Cardiac septum (tissue), 1 donor: ENCODE measurements at regions of chr1 and their contacts with region 1.

Region 1: DNA sequence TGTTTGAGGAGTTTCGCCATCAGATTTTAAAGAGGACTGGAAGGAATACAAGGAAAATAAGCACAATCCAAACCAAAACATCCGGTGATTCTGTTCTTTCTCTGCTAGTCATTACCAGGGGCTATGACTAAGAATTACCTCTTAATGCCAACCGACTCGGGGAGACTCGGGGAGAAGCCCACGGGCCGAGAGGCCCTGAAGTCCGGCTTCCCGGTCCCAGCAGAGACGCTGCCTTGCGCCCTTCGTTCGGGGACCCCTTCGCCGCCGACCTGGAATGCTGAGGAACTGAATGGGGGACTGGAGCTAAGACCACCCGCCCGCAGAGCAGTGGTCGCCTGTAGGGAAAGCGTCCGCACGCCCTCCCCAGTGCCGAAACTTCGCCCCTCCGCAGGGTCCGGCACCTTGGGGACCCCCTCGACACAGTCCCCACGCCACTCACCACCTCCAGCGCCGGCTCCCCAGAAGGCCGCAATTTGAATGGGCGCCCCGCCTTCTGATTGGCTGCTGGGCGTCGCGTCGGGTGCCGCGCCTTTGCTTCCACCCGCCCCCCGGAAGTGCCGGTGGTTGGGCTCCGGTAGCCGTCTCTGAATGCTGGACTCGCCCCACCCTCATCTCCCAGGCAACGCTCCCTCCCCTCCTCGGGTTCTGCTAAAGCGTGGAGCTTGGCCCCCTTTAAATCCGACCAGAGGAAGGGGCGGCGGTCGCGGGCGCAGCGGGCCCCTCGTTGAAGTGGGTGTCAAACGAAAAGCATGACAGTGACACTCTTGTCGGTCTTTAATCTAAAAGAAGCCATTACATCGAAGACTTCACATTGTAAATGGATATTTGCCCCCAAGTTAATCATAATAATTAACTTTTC is at the start of gene KIF14:
- DNase-seq: peak; percentile 96
- total RNA-seq, gene KIF14: 0.05 TPM

Region 2: DNA sequence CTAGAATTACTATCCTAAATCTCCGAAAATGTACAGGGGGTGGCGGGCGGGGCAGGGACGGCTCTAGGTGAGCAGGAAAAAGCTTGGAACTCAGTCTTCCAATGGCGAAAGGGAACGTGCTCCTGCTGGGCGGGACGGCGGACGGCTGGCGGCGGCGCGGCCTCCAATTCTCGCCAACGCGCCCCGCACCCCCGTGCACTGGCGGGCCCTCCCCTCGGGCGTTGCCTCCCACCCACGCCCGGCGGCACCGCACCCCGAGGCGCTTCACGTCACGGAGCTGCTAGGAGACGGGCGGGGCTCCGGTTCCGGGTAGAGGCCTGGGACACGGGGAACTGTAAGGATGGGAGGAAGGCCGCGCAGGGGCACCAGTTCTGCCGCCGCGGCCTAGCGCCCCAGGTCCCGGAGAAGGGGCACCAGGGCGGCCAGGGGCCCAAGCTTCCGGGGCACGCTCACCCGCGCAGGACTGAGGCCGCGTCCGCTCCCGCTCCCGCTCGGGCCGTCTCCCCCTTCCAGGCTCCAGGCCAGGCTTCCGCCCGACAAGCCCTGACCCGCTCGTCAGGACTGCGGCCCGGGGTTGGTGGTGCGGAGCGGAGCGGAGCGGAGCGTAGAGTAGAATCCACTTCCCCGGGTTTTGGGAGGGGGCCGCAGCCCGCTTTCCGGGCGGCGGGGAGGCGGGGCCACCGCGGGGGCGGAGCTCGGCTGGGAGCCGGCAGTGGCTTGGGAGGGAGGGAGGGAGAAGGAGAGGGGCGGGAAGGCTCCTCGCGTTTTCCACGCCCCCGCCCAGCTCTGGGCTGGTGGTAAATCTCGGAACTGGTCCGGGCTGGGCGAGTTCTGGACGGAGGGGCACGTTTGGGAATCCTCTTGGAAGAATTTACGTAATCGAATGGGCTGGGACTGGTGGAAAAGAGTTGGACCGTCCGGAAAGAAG is 49.1 kb after region 1 on chr1 and contains the start of gene DDX59:
- intact Hi-C with region 1: loop called (anchors 5 kb)
- DNase-seq: peak; percentile 97
- total RNA-seq, gene DDX59: 17.3 TPM

Region 3: DNA sequence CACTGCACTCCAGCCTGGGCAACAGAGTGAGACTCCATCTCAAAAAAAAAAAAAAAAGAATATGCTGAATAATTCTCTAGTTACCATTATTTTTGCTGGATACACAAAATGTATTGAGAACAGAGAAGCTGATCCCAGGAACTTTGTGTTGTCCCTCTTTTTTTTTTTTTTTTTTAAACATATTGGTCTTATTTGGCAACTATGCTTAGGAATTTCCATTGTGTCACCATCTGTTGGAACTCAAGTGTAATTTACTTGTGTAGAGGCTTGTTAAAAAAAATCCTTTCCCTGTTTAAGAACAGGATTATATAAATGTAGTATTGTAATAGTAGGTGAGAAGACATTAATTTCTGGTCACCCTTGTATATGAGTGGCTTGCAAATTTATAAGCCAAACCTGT is 146.8 kb after region 1 on chr1:
- intact Hi-C with region 1: no loop called
- DNase-seq: no peak

Region 4: DNA sequence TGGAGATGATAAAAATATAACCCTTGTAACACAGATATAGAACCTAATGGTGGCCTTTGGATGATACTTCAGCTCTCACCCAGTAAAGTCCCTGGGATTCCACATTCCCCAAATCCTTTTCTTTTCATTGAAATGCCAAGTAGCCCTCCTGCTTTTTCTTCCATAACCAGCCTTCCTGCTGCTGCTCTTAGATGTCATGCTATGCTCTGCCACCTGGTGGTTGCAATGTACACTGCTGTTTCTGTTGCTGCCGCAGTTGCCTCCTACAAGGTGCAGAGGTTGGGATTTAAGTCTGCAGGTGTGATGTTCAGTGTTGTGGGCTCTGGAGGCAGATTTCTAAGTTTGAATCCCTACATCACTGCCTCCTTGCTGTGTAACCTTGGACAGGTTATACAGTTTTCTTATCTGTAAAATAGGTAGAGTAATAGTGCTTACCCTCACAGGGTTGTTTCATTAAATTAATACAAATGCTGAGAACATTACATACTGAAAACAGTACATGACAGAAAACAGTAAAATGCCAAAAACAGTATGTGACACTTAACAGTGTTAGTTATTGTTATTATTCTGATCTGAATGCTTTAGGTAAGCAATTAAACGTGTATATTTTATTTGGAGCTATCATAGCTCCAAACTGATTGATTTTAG is 182.5 kb after region 1 on chr1:
- intact Hi-C with region 1: loop called (anchors 2 kb)
- DNase-seq: peak; percentile 83

Region 5: GRCh38 chr1:201042779-201043461 is 422.4 kb after region 1 on chr1:
- intact Hi-C with region 1: loop called (anchors 5 kb)
- DNase-seq: no peak